A549 (cell line): ENCODE measurements at regions of chr14 and their contacts with region 1.

Region 1: DNA sequence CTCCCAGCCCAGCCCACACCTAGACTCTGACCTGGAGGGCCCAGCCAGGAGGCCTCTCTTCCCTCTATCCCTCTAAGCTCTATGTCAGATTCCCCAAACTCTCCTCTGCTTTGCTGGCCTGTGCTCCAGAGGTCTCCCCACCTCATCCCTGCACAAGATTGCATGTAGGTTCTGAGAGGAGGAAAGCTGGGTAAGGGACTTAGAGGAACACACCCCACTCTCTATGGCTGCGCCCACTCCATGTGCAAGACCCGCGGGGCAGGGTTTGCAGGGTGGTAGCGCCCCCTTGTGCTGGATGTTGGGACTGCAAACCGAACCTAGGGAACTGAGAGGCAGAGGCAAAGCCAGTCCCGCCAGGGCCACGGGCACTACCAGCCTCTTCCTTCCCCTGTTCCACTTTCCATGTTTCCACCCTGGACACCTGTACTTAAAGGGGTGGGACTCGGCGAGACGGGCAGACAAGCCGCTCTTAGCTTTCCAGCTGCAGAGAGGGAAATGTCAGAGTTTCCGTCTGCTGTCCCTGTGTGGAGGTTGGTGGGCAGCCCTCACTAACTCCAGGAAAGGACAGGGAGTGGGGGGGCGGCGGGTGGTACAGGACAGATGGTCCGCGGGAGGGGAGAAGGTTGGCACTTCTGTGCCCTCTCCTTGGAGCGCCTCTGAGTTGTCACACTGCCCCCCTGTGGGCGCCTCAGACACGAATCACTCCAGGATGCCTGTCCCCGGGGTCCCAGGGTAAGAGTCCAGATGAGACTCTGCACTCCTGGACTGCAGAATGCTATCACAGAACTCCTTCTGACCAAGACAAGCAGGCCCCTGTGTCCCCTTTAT is 16.8 kb downstream of the MMP14 start:
- DNase-seq: peak; percentile 70 to 82
- ATAC-seq: peak; percentile 91 to 96
- H3K4me3 ChIP-seq: peak overlapping the region; percentile 57
- H3K27ac ChIP-seq: peak overlapping the region; percentile 91 to 98
- H3K4me1 ChIP-seq: peaks cover 4% of the 10 kb centered on the region; the same call in 2 of the 3 replicates
- CTCF ChIP-seq: peak; percentile 92
- EP300 ChIP-seq: no peak
- POLR2A ChIP-seq: no peak
- RAD21 ChIP-seq: peak; percentile 91 to 97

Region 2: DNA sequence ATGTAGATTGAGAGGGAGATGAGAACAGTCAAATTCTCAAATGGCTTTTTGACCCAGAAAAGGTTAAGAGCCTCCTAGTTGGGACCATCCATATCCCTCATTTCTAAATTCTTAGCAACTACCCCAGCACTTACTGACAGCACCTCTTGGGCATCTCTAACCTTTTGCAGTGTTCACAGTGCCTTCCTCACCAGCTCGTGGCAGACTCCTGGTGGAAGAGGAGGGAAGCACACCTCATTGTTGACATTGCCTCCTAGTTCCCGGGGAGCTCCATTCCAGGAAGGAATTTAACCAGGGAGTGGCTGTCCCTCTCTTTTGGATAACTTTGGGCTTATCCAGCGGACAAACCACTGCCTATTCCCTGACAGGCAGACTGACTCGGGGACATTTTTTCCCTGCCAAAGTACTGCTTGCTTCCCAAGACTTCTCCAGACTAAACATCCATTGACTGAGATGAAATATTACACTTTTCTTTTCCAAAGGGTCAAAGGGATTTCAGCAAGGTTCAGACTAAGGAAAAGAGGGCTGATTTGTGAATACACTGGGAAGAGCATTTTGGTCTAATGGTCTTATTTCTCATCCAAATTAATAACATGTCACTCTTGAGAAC is 200.0 kb before region 1 on chr14:
- CTCF ChIA-PET with region 1: interaction called, 67 read pairs
- POLR2A ChIA-PET with region 1: no interaction called
- DNase-seq: peak; percentile 78 to 83
- ATAC-seq: peak; percentile 92 to 95
- H3K4me3 ChIP-seq: no peak overlapping the region
- H3K27ac ChIP-seq: peak overlapping the region; percentile 46 to 59; a peak in 5 of 6 replicates
- H3K4me1 ChIP-seq: peaks cover 38% of the 10 kb centered on the region; the same call in 2 of the 3 replicates
- CTCF ChIP-seq: peak; percentile 82
- EP300 ChIP-seq: no peak
- POLR2A ChIP-seq: no peak
- RAD21 ChIP-seq: peak; percentile 88 to 90

Region 3: DNA sequence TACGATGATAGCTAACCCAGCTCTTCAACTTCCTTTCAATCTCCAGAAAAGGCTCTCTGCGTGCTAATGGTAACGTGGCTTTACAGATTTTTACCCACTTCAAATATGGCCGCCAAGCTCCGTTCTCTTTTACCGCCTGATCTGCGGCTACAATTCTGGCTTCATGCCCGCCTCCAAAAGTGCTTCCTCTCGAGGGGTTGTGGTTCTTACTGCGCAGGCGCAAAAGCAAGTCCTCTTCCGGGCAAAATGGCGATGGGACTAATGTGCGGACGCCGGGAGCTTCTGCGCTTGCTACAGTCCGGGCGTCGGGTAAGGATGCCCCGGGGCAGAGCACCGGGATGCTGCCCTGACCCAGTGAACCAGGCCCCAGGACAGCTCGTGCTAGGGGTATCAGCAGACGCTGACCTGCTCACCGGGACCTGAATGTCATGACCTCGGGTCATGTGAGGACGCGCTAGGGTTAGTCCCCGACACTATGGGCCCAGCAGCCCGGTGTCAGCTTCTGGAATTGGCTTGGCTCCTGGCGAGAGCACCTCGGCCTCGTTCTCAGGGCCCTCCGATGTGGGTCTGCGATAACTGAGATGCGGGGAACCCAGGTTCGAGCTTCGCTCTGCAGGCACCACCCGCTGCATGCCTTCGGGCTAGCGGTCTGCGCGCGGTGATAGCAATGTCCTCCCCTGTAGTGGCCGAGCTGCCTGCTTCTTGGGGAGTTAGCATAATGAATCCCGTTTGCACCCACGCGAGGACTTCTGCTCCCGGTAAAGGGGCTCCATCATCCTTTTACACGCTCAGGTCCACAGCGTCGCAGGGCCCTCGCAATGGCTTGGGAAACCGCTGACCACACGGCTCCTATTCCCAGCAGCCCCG is 86.5 kb before region 1 on chr14 and contains the start of gene OXA1L:
- CTCF ChIA-PET with region 1: interaction called, 16 read pairs
- POLR2A ChIA-PET with region 1: interaction called, 3 read pairs
- DNase-seq: peak; percentile 92 to 97
- ATAC-seq: peak; percentile 91
- H3K4me3 ChIP-seq: peak within 1 kb of the TSS; percentile 66
- H3K27ac ChIP-seq: peak within 1 kb of the TSS; percentile 91 to 92
- H3K4me1 ChIP-seq: peaks cover 12% of the 10 kb centered on the region
- CTCF ChIP-seq: no peak
- EP300 ChIP-seq: no peak
- POLR2A ChIP-seq: peak; percentile 85
- RAD21 ChIP-seq: no peak
- polyA plus RNA-seq, gene OXA1L: 199 and 247 TPM in 2 replicates

Region 4: GRCh38 chr14:22814941-22815713 is 38.0 kb before region 1 on chr14 and contains the start of gene SLC7A7:
- CTCF ChIA-PET with region 1: interaction called, 259 read pairs
- POLR2A ChIA-PET with region 1: no interaction called
- DNase-seq: peak; percentile 38 to 62
- ATAC-seq: peak; percentile 61 to 68
- H3K4me3 ChIP-seq: peak within 1 kb of the TSS; percentile 38
- H3K27ac ChIP-seq: peak within 1 kb of the TSS; percentile 82 to 89
- H3K4me1 ChIP-seq: peaks cover 47% of the 10 kb centered on the region
- CTCF ChIP-seq: no peak
- EP300 ChIP-seq: no peak
- POLR2A ChIP-seq: no peak
- RAD21 ChIP-seq: no peak
- polyA plus RNA-seq, gene SLC7A7: 86.8 and 104 TPM in 2 replicates

Region 5: GRCh38 chr14:22829661-22830442 is 23.3 kb before region 1 on chr14 and contains the start of gene MRPL52:
- CTCF ChIA-PET with region 1: interaction called, 259 read pairs
- POLR2A ChIA-PET with region 1: interaction called, 3 read pairs
- DNase-seq: peak; percentile 88 to 90
- ATAC-seq: peak; percentile 95 to 98
- H3K4me3 ChIP-seq: peak within 1 kb of the TSS; percentile 67
- H3K27ac ChIP-seq: peak within 1 kb of the TSS; percentile 81 to 93
- H3K4me1 ChIP-seq: peaks cover 8% of the 10 kb centered on the region
- CTCF ChIP-seq: no peak
- EP300 ChIP-seq: no peak
- POLR2A ChIP-seq: peak; percentile 77
- RAD21 ChIP-seq: no peak
- polyA plus RNA-seq, gene MRPL52: 113 and 116 TPM in 2 replicates

Region 6: GRCh38 chr14:22872033-22872832 is 19.1 kb after region 1 on chr14:
- CTCF ChIA-PET with region 1: interaction called, 146 read pairs
- POLR2A ChIA-PET with region 1: no interaction called
- DNase-seq: peak; percentile 87 to 90
- ATAC-seq: peak; percentile 72 to 82
- H3K4me3 ChIP-seq: peak overlapping the region; percentile 78
- H3K27ac ChIP-seq: peak overlapping the region; percentile 94 to 98
- H3K4me1 ChIP-seq: peaks cover 21% of the 10 kb centered on the region
- CTCF ChIP-seq: peak; percentile 91
- EP300 ChIP-seq: no peak
- POLR2A ChIP-seq: 0 out of 2 replicates have a peak, but pooled peaks have one; percentile 24
- RAD21 ChIP-seq: peak; percentile 69 to 75

Region 7: DNA sequence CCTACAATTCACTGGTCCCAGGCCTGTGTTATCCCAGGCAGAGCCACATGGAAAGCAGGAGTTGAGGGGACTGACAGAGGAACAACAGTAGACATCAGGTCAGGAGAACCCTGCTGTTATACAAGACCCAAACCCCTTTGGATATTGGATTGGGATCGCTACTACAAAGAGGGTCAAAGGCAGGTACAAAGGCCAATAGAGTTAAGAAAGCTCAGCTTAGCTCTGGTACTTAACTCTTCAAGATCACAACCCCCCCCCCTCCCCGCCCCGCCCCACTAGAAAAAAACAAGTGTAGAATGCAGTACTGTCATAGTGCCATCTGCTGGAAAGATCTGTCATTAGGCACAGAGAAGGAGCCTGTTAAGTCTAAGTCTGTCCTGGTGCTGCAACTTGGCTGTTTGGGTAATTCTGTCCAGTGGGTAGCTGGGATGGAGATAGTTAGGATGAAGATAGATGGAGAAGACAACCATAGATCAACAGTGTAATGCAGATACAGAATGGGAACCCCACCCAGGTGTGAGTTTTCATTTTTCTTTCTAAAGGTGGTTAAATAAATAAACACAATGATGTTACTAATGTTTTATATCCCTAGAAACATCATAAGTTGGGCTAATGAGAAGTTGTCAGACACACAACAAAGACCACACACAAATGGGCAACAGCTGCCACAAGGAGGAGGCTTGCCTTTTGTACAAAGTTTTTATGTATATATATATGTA is 47.1 kb after region 1 on chr14:
- CTCF ChIA-PET with region 1: interaction called, 41 read pairs
- POLR2A ChIA-PET with region 1: no interaction called
- DNase-seq: peak; percentile 77 to 81
- ATAC-seq: peak; percentile 81 to 83
- H3K4me3 ChIP-seq: no peak overlapping the region
- H3K27ac ChIP-seq: no peak overlapping the region; a peak in 1 of 6 replicates
- H3K4me1 ChIP-seq: peaks cover 17% of the 10 kb centered on the region
- CTCF ChIP-seq: peak; percentile 72
- EP300 ChIP-seq: no peak
- POLR2A ChIP-seq: no peak
- RAD21 ChIP-seq: peak; percentile 62 to 70